Heart left ventricle (tissue), 16 donors: ENCODE measurements at regions of chr17 and their contacts with region 1.

Region 1: DNA sequence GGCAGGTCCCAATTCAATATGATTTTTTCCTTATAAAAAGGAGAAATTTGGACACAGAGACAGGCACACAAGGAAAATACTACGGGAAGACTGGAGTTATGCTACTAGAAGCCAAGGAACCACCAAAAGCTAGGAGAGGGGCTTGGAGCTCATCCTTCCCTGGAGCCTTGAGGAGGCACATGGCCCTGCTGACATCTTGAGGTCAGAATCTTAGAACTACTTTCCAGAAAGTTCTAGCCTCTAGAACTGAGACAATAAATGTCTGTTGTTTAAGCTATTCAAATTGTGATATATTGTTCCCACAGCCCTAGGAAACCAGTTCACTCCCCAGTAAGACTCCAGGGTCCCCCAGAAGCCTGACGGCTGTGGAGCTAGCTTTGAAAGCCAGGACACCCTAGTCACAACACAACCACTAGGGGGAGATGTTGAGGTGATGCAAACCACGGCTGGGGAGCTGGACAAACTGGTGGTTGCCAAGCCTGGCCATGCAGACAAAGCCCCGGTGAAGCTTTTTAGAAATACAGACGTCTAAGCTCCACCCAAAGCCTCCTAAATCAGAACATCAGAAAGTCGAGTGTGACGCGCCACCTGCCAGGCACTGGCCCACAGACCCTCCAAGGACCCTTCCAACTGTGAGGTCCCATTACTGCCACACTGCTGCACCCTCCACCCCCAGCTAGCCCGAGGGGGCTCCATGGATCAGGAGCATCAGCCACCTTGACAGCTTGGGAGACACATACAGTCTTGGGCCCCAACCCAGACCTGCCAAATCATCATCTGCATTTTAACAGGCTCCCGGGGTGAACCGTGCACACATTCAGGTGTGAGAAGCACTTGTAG is 106.4 kb downstream of the SLC39A11 start:
- DNase-seq: peak in 4 of 5 donors; percentile 48 to 63 (median 60)
- ATAC-seq: peak; percentile 42 to 85 (median 78)
- H3K4me3 ChIP-seq: no peak overlapping the region
- H3K27ac ChIP-seq: no peak overlapping the region
- H3K4me1 ChIP-seq: peaks cover 0 to 6% (median 0%) of the 10 kb centered on the region in 12 donors
- H3K27me3 ChIP-seq: no peaks in the 10 kb centered on the region
- CTCF ChIP-seq: peak; percentile 68 to 87 (median 81)
- POLR2A ChIP-seq: no peak

Region 2: DNA sequence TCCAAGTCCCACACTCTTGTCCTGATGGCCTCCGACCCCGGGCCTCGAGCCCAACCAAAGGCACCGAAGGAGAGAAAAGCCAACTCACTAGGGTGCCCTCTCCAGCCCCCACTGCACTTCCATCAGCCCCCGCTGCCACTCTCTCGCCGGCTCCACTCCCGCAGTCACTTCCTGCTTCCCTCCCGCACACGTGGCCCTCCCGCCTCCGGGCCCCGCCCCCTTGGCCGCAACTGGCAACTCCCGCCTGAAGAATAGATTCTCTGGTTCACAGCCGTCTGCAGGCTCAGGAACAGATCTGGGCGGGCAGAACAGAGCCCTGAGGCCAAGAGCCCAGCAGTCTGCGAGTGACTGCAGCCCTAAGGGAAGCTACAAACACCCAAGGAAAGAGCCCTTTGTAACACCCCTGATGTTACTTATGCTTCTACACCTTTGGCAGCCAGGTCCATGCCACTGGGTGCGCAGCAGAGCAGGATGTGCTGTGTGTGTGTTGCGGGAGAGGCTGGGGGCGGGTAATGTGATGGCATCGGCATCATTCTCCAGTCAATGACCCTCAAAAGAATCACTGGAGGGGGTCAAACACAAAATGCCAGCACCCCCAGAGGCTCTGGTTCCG is 106.5 kb after region 1 on chr17 and contains the start of gene SLC39A11:
- intact Hi-C with region 1: loop called in 2 of 10 experiments (anchors 5 to 10 kb)
- DNase-seq: peak; percentile 92 to 95 (median 94)
- ATAC-seq: peak; percentile 88 to 100 (median 99)
- H3K4me3 ChIP-seq: peak within 1 kb of the TSS; percentile 25 to 87 (median 72)
- H3K27ac ChIP-seq: peak within 1 kb of the TSS in 11 of 12 donors; percentile 17 to 78 (median 71)
- H3K4me1 ChIP-seq: peaks cover 0 to 31% (median 13%) of the 10 kb centered on the region in 12 donors
- H3K27me3 ChIP-seq: no peaks in the 10 kb centered on the region
- CTCF ChIP-seq: no peak
- POLR2A ChIP-seq: peak in 1 of 2 donors; percentile 41
- total RNA-seq, gene SLC39A11: 5.6 to 23.3 (median 8.6) TPM